Dendritic cell treated with granulocyte-macrophage colony-stimulating factor and Interleukin-4, amounts not matched to agents 40 ng/mL and 50 ng/mL, for 4 days (primary cell): ENCODE measurements at regions of chr11 and their contacts with region 1.

Region 1: DNA sequence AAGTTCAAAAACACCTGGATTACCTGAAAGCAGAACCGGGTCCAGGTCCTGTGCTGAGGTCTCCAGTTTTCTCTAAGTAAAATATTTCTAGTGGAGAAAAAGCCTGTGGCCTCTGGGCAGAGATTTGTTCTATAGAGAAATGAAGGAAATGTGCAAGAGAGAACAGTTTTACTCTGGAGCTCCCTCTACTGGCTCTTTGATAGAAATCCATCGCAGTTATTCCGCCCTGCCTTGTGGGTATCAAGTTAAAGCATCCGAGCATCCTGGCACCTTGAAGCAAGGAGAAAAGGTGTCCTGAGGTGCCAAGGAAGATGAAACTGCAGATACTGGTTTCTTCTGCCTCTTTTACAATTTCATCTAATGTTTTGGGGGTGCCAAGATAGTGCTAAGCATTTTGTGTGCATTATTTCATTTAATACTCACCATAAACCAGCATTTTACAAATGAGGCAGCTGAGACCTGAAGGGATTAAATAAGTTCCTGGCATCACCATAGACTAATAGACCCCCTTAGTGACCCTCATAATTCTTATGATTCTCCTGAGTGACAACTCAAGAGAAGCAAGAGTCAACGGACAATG is 113.1 kb upstream of the HSD17B12 start:
- H3K4me3 Mint-ChIP-seq: no peak overlapping the region
- H3K27ac Mint-ChIP-seq: no peak overlapping the region
- H3K4me1 Mint-ChIP-seq: no peaks in the 10 kb centered on the region
- H3K27me3 Mint-ChIP-seq: peaks cover 34% of the 10 kb centered on the region

Region 2: DNA sequence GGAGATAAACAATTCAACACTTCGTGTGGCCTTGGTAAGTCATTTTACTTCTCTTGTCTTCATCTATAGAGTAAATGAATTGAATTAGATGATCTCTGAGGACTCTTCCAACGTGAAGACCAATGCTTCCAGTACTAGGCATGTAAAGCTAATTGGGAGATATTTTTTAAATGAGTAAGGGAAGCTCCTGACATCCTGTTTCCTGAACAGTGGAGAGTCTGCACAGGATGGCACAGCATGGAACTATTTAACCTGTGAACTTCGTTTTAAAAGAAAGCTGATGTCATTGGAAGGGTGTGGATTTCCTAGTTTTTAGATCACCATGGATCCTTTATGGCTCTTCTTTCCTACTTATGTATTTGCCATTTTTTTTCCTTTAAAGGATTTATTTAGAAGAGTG is 64.7 kb after region 1 on chr11:
- intact Hi-C with region 1: no loop called
- H3K4me3 Mint-ChIP-seq: no peak overlapping the region
- H3K27ac Mint-ChIP-seq: no peak overlapping the region
- H3K4me1 Mint-ChIP-seq: no peaks in the 10 kb centered on the region
- H3K27me3 Mint-ChIP-seq: peaks cover 40% of the 10 kb centered on the region

Region 3: DNA sequence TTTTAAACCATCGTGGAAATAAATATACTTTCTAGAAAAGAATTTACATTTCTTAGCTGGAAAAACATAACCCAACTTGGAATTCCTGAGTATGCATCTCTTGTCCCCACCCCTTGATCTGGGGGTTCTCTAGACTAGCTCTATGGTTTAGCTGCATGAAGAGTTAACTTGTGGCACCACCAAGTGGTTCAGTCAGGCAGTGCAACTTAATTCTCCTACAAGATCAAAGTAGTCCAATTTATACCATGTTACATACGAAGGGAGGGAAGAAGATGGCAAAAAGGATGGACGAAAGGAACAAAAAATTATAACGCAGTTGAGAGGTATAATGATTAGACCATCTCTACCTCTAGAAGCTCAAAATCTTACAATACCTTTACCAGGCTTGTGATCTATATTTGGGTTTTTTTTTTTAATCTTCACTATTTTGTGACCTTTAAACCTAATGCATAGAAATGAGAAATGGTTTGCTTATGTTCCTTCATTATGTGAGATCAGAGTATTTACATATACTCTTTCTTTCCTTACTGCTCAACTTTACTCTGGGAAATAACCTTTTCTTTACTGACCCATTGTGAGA is 284.7 kb after region 1 on chr11:
- intact Hi-C with region 1: loop called (anchors 5 kb)
- H3K4me3 Mint-ChIP-seq: no peak overlapping the region
- H3K27ac Mint-ChIP-seq: no peak overlapping the region
- H3K4me1 Mint-ChIP-seq: no peaks in the 10 kb centered on the region
- H3K27me3 Mint-ChIP-seq: no peaks in the 10 kb centered on the region